CD4-positive, alpha-beta memory T cell (primary cell): ENCODE measurements at regions of chr1 and their contacts with region 1.

Region 1: GRCh38 chr1:165597883-165598675 is 33.0 kb upstream of the MGST3 start:
- DNase-seq: peak; percentile 84 to 91 (median 86)
- H3K4me3 ChIP-seq: peak overlapping the region; percentile 59 to 71
- H3K4me3 Mint-ChIP-seq: peak overlapping the region; percentile 88 to 92 (median 90)
- H3K27ac ChIP-seq: peak overlapping the region; percentile 7
- H3K27ac Mint-ChIP-seq: peak overlapping the region; percentile 80 to 95 (median 91)
- H3K4me1 ChIP-seq: peaks cover 18% of the 10 kb centered on the region
- H3K4me1 Mint-ChIP-seq: peaks cover 18 to 30% (median 24%) of the 10 kb centered on the region in 4 donors
- H3K27me3 ChIP-seq: peaks cover 22% of the 10 kb centered on the region
- H3K27me3 Mint-ChIP-seq: peaks cover 17 to 30% of the 10 kb centered on the region in 2 donors

Region 2: GRCh38 chr1:165383067-165383466 is 215.0 kb before region 1 on chr1:
- CTCF ChIA-PET with region 1: interaction called, 28 read pairs
- POLR2A ChIA-PET with region 1: no interaction called
- intact Hi-C with region 1: no loop called
- DNase-seq: no peak
- H3K4me3 ChIP-seq: no peak overlapping the region
- H3K4me3 Mint-ChIP-seq: no peak overlapping the region
- H3K27ac ChIP-seq: no peak overlapping the region
- H3K27ac Mint-ChIP-seq: no peak overlapping the region
- H3K4me1 ChIP-seq: no peaks in the 10 kb centered on the region
- H3K4me1 Mint-ChIP-seq: no peaks in the 10 kb centered on the region
- H3K27me3 ChIP-seq: peaks cover 4% of the 10 kb centered on the region
- H3K27me3 Mint-ChIP-seq: peaks cover 16 to 30% of the 10 kb centered on the region in 2 donors

Region 3: GRCh38 chr1:165411396-165411795 is 186.7 kb before region 1 on chr1:
- CTCF ChIA-PET with region 1: interaction called, 10 read pairs
- POLR2A ChIA-PET with region 1: no interaction called
- intact Hi-C with region 1: no loop called
- DNase-seq: no peak
- H3K4me3 ChIP-seq: no peak overlapping the region
- H3K4me3 Mint-ChIP-seq: no peak overlapping the region
- H3K27ac ChIP-seq: no peak overlapping the region
- H3K27ac Mint-ChIP-seq: no peak overlapping the region
- H3K4me1 ChIP-seq: no peaks in the 10 kb centered on the region
- H3K4me1 Mint-ChIP-seq: peaks cover 0 to 1% (median 0%) of the 10 kb centered on the region in 4 donors
- H3K27me3 ChIP-seq: no peaks in the 10 kb centered on the region
- H3K27me3 Mint-ChIP-seq: peaks cover 19 to 31% of the 10 kb centered on the region in 2 donors

Region 4: DNA sequence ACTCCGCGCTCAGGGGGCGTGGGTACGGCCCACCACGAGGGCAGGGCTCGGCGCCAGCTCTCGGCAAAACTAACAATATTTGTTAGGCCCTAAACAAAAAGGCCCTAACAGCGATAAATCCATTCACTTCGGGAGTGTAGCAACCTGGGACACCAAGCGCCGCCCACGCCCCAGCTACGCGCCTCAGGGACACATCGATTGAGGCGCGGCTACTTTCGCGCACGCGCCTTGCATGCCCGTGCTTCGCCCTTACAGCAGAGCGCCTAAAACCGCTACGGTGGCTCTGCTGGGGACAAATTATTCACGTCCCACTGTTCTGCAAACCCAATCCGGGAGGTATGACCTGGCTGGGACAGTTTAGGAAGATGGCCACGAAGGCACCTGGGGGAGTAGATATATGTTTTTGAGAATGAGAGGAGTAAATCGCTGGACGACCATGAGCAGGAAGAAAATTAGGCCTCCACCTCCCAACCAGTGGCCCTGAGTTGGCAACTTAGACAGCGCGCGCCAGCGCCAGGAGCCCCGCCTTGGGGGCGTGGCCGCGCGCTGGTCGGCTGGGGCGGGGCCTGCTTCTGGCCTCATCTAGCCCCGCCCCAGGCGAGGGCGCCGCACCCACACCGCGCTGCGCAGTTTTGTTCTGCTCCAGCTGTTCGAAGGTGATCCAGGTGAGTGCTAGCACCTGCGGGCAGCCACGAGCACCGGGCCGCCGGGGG is 32.7 kb after region 1 on chr1 and contains the start of gene MGST3:
- CTCF ChIA-PET with region 1: interaction called, 3 read pairs
- POLR2A ChIA-PET with region 1: interaction called, 4 read pairs
- intact Hi-C with region 1: loop called (anchors 1 kb)
- DNase-seq: peak; percentile 93 to 97 (median 94)
- H3K4me3 ChIP-seq: peak within 1 kb of the TSS; percentile 86 to 97
- H3K4me3 Mint-ChIP-seq: no peak within 1 kb of the TSS
- H3K27ac ChIP-seq: peak within 1 kb of the TSS; percentile 69
- H3K27ac Mint-ChIP-seq: peak within 1 kb of the TSS in 1 of 7 donors; percentile 85
- H3K4me1 ChIP-seq: peaks cover 35% of the 10 kb centered on the region
- H3K4me1 Mint-ChIP-seq: peaks cover 15 to 22% (median 18%) of the 10 kb centered on the region in 4 donors
- H3K27me3 ChIP-seq: no peaks in the 10 kb centered on the region
- H3K27me3 Mint-ChIP-seq: no peaks in the 10 kb centered on the region
- total RNA-seq, gene MGST3: 67.6 to 74.0 TPM

Region 5: DNA sequence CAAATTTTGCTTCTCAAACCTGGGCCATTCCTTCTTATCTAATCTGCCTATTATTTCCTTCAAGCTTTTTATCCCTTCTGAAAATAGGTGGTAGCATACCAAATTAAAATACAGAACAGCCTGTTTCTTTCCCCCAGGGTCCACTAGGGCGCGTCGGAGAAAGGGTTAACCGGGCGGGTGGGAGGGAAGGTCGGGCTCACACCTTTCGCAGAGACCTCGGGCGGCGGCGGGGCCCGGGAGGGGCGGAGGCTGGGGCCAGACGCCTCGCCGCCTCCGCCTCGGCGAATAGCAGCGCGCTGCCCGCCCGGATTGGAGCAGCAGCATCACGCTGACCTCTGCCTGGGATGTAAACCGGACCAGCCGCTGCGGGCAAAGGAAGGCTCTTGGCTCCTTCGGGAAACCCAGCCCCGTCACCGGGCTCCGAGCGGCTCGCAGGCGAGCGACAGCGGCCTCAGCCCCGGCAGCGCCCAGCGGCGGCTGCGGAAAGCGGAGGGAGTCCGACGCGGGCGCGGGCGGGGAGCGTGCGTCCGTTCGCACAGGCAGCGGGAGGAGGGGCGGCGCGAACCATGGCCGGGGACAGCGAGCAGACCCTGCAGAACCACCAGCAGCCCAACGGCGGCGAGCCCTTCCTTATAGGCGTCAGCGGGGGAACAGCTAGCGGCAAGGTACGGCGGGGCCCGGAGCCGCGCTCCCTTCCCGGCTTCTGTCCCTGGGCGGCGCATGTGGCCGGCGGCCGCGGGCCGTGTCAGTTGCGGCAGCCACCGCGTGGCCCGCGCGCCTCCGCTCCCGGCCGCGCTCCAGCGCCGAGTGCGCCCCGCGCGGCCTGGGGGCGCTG is 229.4 kb after region 1 on chr1 and contains the start of gene UCK2:
- CTCF ChIA-PET with region 1: interaction called, 11 read pairs
- POLR2A ChIA-PET with region 1: no interaction called
- intact Hi-C with region 1: no loop called
- DNase-seq: peak; percentile 37 to 50 (median 43)
- H3K4me3 ChIP-seq: peak within 1 kb of the TSS; percentile 73 to 81
- H3K4me3 Mint-ChIP-seq: peak within 1 kb of the TSS; percentile 91 to 96 (median 93)
- H3K27ac ChIP-seq: peak within 1 kb of the TSS; percentile 45
- H3K27ac Mint-ChIP-seq: peak within 1 kb of the TSS; percentile 16 to 91 (median 83)
- H3K4me1 ChIP-seq: peaks cover 12% of the 10 kb centered on the region
- H3K4me1 Mint-ChIP-seq: peaks cover 11 to 24% (median 18%) of the 10 kb centered on the region in 4 donors
- H3K27me3 ChIP-seq: no peaks in the 10 kb centered on the region
- H3K27me3 Mint-ChIP-seq: no peaks in the 10 kb centered on the region
- total RNA-seq, gene UCK2: 2.1 to 2.7 TPM

Region 6: GRCh38 chr1:165928075-165928731 is 330.1 kb after region 1 on chr1:
- CTCF ChIA-PET with region 1: interaction called, 19 read pairs
- POLR2A ChIA-PET with region 1: no interaction called
- intact Hi-C with region 1: no loop called
- DNase-seq: peak in 4 of 5 donors; percentile 45 to 55 (median 48)
- H3K4me3 ChIP-seq: no peak overlapping the region
- H3K4me3 Mint-ChIP-seq: no peak overlapping the region
- H3K27ac ChIP-seq: no peak overlapping the region
- H3K27ac Mint-ChIP-seq: peak overlapping the region in 1 of 7 donors; percentile 10
- H3K4me1 ChIP-seq: no peaks in the 10 kb centered on the region
- H3K4me1 Mint-ChIP-seq: peaks cover 0 to 2% (median 0%) of the 10 kb centered on the region in 4 donors
- H3K27me3 ChIP-seq: no peaks in the 10 kb centered on the region
- H3K27me3 Mint-ChIP-seq: peaks cover 10 to 17% of the 10 kb centered on the region in 2 donors